WTC11 (cell line): ENCODE measurements at regions of chr1 and their contacts with region 1.

Region 1: GRCh38 chr1:6438047-6438525 is 13.5 kb downstream of the ESPN start:
- DNase-seq: peak; percentile 94
- ATAC-seq: peak; percentile 78
- H3K4me3 Mint-ChIP-seq: peak overlapping the region; percentile 44; the same call in 1 of the 2 replicates
- H3K27ac Mint-ChIP-seq: no peak overlapping the region
- H3K4me1 Mint-ChIP-seq: peaks cover 28% of the 10 kb centered on the region
- H3K27me3 Mint-ChIP-seq: peaks cover 33% of the 10 kb centered on the region
- CTCF ChIP-seq: peak; percentile 99

Region 2: DNA sequence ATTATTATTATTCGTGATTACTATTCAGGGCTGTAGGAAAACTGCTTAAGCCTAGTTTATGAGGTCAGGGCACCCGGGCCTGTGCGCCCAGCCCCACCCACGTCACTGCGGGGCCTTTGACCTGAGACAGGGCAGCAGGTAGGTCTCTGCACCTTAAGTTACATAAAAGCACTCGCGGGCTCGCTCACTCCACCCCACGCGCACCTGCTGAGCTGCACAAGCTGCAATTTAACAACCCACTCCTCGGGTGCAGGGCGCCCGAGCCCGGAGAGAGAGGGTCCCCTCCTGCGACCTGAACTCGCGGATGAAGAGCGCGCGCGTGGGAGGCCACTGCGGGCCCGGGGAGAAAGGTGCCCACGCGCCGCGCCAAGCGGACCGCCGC is 202.8 kb before region 1 on chr1:
- CTCF ChIA-PET with region 1: interaction called, 24 read pairs
- POLR2A ChIA-PET with region 1: no interaction called
- DNase-seq: no peak
- ATAC-seq: no peak
- H3K4me3 Mint-ChIP-seq: peak overlapping the region; percentile 85
- H3K27ac Mint-ChIP-seq: peak overlapping the region; percentile 84
- H3K4me1 Mint-ChIP-seq: peaks cover 44% of the 10 kb centered on the region
- H3K27me3 Mint-ChIP-seq: no peaks in the 10 kb centered on the region
- CTCF ChIP-seq: no peak

Region 3: DNA sequence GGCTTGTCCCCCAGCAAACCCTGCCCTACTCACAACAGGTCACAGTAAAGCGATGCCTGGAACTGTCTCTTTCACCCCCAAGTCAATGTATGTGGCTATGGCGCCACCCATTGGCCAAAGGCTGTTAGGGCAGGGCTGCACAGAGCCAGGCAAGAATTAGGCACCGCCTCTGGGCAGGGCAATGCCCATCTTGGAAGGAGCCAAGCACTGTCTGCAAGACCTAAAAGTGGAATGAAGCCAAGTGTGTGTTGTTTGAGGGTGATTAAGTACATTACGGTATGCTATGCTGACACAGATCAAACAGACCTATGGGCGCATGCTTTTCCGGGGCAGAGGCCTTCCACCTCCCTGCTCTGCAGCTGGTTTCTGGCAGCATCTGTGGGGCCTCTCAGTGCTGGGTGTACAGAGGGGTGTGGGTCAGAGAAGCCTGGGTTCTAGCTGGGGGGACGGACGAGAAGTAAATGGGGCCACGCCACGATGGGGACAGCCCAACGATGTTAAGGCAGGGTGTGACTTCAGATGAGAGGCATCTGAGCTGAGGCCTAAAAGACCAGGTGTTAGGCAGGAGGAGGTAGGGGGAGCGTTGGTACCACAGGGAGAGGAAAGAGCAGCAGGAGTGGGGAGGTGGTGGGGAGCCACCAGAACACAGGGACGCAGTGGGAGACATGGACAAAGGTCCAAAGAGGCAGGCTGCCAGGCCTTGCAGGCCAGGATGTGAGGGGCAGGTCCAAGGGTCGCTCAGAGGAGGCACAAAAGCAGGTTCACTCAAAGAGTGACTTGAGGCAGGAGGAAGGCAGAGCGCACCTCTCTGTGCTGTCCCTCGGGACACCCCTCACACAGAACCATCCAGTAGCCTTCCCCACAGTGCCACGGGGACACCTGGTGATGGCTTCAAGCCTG is 94.3 kb before region 1 on chr1:
- CTCF ChIA-PET with region 1: interaction called, 15 read pairs
- POLR2A ChIA-PET with region 1: no interaction called
- DNase-seq: peak; percentile 91
- ATAC-seq: peak; percentile 92
- H3K4me3 Mint-ChIP-seq: no peak overlapping the region
- H3K27ac Mint-ChIP-seq: peak overlapping the region; percentile 60
- H3K4me1 Mint-ChIP-seq: peaks cover 14% of the 10 kb centered on the region
- H3K27me3 Mint-ChIP-seq: no peaks in the 10 kb centered on the region
- CTCF ChIP-seq: peak; percentile 94

Region 4: DNA sequence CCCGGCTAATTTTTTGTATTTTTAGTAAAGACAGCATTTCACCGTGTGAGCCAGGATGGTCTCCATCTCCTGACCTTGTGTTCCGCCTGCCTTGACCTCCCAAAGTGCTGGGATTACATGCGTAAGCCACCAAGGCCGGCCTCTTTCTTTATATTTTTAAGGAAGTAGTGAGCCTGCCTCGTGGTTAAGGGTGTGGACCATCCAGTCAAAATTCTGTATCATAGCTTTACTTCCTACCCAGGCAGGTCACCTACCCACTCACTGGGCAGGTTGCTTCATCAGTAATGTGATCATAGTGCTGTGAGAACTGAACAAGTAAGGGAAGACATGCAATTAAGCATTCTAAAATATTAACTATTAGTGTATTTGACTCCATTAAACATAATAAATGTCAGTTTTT is 36.4 kb before region 1 on chr1:
- CTCF ChIA-PET with region 1: interaction called, 10 read pairs
- POLR2A ChIA-PET with region 1: no interaction called
- DNase-seq: no peak
- ATAC-seq: no peak
- H3K4me3 Mint-ChIP-seq: no peak overlapping the region
- H3K27ac Mint-ChIP-seq: no peak overlapping the region
- H3K4me1 Mint-ChIP-seq: no peaks in the 10 kb centered on the region
- H3K27me3 Mint-ChIP-seq: peaks cover 20% of the 10 kb centered on the region
- CTCF ChIP-seq: no peak

Region 5: DNA sequence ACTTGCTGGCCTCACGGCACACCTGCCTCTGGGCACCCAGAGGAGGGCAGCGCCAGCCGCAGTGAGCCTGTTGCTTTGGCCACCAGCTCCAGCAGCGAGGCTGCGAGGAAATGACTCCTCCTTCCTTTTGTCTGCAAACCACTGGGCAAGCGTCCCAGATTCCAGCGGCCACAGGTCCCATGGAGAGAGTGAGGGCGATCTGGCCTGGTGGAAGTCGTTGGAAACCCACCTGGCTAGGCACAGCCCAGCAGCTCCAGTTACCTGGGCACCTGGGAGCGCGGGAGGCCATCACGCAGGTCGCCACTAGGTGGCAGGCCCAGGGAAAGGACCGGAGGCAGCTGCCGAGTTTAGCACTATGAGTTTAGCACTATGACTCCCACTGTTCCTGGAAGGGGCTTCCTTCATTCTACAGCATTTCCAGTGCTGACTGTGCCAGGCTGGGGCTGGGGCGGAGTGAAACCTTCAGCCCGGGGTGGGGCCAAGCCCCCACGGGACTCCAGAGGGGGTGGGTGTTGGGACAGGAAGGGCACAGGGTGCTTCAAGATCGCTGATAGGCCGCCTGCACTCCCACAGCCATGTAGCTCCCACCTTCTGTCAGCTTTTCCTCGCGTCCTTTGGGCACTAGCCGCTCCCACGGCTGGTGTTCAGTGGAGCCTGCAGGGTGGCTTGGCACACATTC is 14.6 kb before region 1 on chr1:
- CTCF ChIA-PET with region 1: interaction called, 281 read pairs
- POLR2A ChIA-PET with region 1: no interaction called
- DNase-seq: peak; percentile 91
- ATAC-seq: peak; percentile 57
- H3K4me3 Mint-ChIP-seq: peak overlapping the region; percentile 60
- H3K27ac Mint-ChIP-seq: no peak overlapping the region
- H3K4me1 Mint-ChIP-seq: peaks cover 6% of the 10 kb centered on the region
- H3K27me3 Mint-ChIP-seq: peaks cover 81% of the 10 kb centered on the region
- CTCF ChIP-seq: peak; percentile 91

Region 6: GRCh38 chr1:6475381-6476133 is 37.5 kb after region 1 on chr1:
- CTCF ChIA-PET with region 1: interaction called, 73 read pairs
- POLR2A ChIA-PET with region 1: no interaction called
- DNase-seq: peak; percentile 80
- ATAC-seq: peak; percentile 34
- H3K4me3 Mint-ChIP-seq: no peak overlapping the region
- H3K27ac Mint-ChIP-seq: no peak overlapping the region
- H3K4me1 Mint-ChIP-seq: peaks cover 34% of the 10 kb centered on the region
- H3K27me3 Mint-ChIP-seq: no peaks in the 10 kb centered on the region
- CTCF ChIP-seq: peak; percentile 97

Region 7: DNA sequence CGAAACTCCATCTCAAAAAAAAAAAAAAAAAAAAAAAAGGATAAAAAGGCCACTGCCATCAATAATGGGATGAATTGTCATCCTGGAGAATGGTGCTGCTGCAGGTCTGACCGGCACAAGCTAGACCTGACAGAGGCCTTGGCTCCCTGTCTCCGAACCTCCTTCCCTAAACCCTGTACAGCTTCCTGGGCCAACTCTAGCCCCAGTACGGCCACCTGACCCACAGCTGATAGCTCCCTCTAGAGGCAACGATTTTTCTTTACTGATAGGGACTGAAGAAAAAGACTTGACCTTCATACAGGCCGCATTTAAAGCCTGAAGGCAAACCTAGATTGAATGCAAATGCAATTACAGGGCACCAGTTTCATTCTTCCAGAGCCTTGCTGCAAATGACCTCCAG is 85.5 kb after region 1 on chr1:
- CTCF ChIA-PET with region 1: interaction called, 12 read pairs
- POLR2A ChIA-PET with region 1: no interaction called
- DNase-seq: peak; percentile 60
- ATAC-seq: peak; percentile 67
- H3K4me3 Mint-ChIP-seq: no peak overlapping the region
- H3K27ac Mint-ChIP-seq: peak overlapping the region; percentile 67
- H3K4me1 Mint-ChIP-seq: peaks cover 30% of the 10 kb centered on the region
- H3K27me3 Mint-ChIP-seq: no peaks in the 10 kb centered on the region
- CTCF ChIP-seq: peak; percentile 41

Region 8: DNA sequence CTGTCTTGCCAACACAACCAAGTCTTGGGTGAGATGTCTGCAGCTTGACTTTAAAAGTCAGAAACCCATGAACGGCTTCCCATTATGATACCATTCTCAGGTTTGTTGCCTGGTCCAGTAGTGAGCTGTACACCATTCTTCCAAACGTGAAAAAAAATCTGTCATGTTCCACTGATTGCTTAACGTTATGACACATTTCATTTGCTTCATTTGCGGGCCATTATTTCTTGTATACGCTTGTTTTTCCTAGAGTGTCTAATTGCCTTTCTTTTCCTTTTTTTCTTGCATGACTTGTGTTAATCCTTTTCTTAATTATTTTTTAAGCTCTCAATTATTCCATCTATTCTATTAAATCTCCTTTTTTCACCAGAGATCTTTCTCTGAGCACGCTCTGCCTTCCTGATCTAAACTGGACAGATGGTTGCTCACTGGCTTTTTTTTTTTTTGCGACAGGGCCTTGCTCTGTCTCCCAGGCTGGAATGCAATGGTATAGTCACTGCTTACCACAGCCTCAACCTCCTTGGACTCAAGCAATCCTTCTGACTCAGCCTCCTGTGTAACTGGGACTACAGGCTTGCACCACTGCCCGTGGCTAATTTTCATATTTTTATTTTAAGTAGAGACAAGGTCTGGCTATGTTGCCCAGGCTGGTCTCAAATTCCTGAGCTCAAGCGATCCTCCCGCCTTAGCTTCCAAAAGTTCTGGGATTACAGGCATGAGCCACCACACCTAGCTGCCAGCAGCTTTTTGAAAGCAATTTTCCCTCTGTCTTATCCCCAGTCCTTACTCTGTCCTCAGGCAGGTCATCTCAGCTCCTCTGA is 315.4 kb after region 1 on chr1:
- CTCF ChIA-PET with region 1: no interaction called
- POLR2A ChIA-PET with region 1: no interaction called
- DNase-seq: no peak
- ATAC-seq: no peak
- H3K4me3 Mint-ChIP-seq: no peak overlapping the region
- H3K27ac Mint-ChIP-seq: no peak overlapping the region
- H3K4me1 Mint-ChIP-seq: peaks cover 5% of the 10 kb centered on the region
- H3K27me3 Mint-ChIP-seq: peaks cover 12% of the 10 kb centered on the region
- CTCF ChIP-seq: no peak